CD8-positive, alpha-beta T cell (primary cell): ENCODE measurements at regions of chr11 and their contacts with region 1.

Region 1: GRCh38 chr11:3091791-3092602 is 34.8 kb upstream of the CARS1 start:
- DNase-seq: peak; percentile 50 to 86 (median 67)
- ATAC-seq: peak; percentile 97
- H3K4me3 ChIP-seq: no peak overlapping the region
- H3K4me3 Mint-ChIP-seq: no peak overlapping the region
- H3K27ac ChIP-seq: no peak overlapping the region
- H3K27ac Mint-ChIP-seq: no peak overlapping the region
- H3K4me1 ChIP-seq: no peaks in the 10 kb centered on the region
- H3K4me1 Mint-ChIP-seq: no peaks in the 10 kb centered on the region
- H3K27me3 ChIP-seq: no peaks in the 10 kb centered on the region
- H3K27me3 Mint-ChIP-seq: no peaks in the 10 kb centered on the region
- CTCF ChIP-seq: peak; percentile 90

Region 2: DNA sequence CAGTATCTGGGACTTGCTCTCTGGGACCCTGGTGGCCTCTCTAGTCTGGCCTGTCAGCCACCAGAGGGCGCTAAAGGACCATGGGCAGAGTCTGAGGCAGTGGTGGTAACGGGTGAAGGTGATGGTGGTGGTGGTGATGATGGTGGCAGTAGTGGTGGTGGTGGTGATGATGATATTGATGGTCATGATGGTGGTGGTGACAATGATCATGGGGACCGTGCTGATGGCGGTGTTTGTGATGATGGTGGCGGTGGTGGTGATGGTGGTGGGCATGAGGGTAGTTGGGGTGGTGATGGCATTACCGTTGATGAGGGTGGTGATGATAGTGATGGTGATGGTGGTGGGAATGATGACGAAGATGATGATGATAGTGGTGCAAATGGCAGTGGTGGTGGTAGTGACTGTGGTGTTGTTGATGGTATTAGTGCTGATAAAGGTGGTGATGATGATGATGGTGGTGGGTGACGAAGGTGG is 663.6 kb before region 1 on chr11:
- CTCF ChIA-PET with region 1: interaction called, 3 read pairs
- POLR2A ChIA-PET with region 1: no interaction called
- intact Hi-C with region 1: loop called in 1 of 2 experiments (anchors 2 kb)
- DNase-seq: peak; percentile 75 to 94 (median 87)
- ATAC-seq: peak; percentile 91
- H3K4me3 ChIP-seq: no peak overlapping the region
- H3K4me3 Mint-ChIP-seq: no peak overlapping the region
- H3K27ac ChIP-seq: no peak overlapping the region
- H3K27ac Mint-ChIP-seq: no peak overlapping the region
- H3K4me1 ChIP-seq: no peaks in the 10 kb centered on the region
- H3K4me1 Mint-ChIP-seq: no peaks in the 10 kb centered on the region
- H3K27me3 ChIP-seq: no peaks in the 10 kb centered on the region
- H3K27me3 Mint-ChIP-seq: no peaks in the 10 kb centered on the region
- CTCF ChIP-seq: peak; percentile 70

Region 3: DNA sequence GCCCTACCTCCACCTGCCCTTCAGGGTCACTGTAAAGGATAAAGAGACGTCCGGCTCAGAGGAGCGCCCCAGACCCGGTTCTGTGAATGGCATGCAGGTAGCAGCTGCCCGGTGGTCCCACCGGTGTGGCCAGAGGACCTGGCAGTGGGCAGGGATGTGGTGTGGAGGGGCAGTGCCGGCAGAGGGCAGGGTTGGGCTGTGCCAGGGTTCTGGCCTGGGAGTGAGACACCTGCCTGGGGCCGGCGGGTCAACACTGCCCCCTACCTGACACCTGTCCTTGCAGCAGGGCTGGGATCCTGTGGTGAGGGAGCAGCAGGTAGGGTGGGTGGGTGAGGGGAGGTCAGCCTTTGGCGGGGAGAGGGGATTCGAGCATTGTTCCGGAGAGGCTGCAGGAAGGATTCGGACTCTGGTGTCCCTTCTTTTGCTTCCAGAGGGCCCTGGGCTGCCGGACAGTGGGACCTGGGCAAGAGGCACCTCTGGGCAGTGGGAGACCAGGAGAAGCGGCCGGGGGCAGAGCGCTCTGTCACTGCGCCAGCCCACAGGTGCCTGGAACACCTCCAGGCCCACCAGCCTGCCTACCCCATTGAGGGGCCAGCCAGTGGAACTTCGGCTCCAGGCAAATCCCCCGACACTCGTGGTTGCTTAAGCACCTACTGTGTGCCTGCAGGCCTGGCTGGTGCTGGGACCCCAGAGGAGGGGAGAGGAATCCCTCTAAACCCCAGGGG is 161.1 kb before region 1 on chr11:
- CTCF ChIA-PET with region 1: interaction called, 13 read pairs
- POLR2A ChIA-PET with region 1: no interaction called
- intact Hi-C with region 1: loop called in 1 of 2 experiments (anchors 5 kb)
- DNase-seq: peak in 5 of 9 experiments; percentile 38 to 59 (median 49)
- ATAC-seq: no peak
- H3K4me3 ChIP-seq: peak overlapping the region; percentile 37 to 62
- H3K4me3 Mint-ChIP-seq: peak overlapping the region; percentile 80
- H3K27ac ChIP-seq: no peak overlapping the region
- H3K27ac Mint-ChIP-seq: no peak overlapping the region
- H3K4me1 ChIP-seq: peaks cover 36% of the 10 kb centered on the region
- H3K4me1 Mint-ChIP-seq: peaks cover 22% of the 10 kb centered on the region
- H3K27me3 ChIP-seq: peaks cover 12 to 17% of the 10 kb centered on the region in 2 experiments
- H3K27me3 Mint-ChIP-seq: peaks cover 24% of the 10 kb centered on the region
- CTCF ChIP-seq: no peak

Region 4: DNA sequence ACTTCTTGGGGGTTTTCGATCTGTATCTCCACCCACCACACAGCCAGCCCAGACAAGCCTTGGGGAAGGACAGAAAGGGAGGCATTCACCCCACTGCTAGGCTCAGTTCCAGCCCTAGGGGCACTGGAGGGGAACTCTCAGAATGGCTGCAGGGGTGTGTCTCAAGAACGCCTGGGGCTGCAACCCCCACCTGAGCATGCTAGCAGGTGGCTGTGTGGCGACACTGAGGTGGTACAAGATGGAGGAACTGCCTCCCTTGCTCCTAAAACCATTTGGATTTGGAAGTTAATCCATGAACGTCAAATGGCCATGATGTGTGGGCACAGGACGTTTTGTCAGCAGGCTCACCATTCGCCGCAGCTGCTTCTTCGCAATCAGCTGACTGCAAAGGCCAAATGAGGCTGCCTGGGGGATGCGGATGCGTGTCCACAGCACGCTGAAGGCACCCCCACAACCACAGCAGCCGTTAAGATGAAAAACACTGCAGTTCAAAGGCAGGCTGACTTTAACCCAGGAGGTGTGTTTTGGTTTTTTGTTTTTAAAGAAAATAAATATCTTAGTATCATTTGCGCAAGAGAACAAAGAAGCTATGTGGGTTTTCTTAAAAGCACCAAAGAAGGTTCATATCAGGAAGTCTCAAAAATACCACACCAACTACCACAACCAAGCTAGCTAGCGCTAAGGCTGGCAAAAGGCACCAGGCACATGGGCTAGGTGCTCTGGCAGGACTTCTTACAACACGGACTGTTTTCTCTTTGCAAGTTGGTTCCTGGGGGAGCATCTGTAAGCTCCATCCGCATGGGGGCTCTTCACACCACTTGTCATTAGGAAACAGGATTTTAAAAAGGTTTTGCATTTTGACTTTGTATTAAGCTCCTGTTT is 77.7 kb before region 1 on chr11:
- CTCF ChIA-PET with region 1: interaction called, 15 read pairs
- POLR2A ChIA-PET with region 1: interaction called, 3 read pairs
- intact Hi-C with region 1: no loop called
- DNase-seq: peak; percentile 61 to 94 (median 85)
- ATAC-seq: peak; percentile 84
- H3K4me3 ChIP-seq: peak overlapping the region; percentile 17 to 27
- H3K4me3 Mint-ChIP-seq: peak overlapping the region; percentile 57
- H3K27ac ChIP-seq: peak overlapping the region; percentile 46 to 62
- H3K27ac Mint-ChIP-seq: peak overlapping the region; percentile 92
- H3K4me1 ChIP-seq: peaks cover 86% of the 10 kb centered on the region
- H3K4me1 Mint-ChIP-seq: peaks cover 74% of the 10 kb centered on the region
- H3K27me3 ChIP-seq: no peaks in the 10 kb centered on the region
- H3K27me3 Mint-ChIP-seq: no peaks in the 10 kb centered on the region
- CTCF ChIP-seq: no peak

Region 5: DNA sequence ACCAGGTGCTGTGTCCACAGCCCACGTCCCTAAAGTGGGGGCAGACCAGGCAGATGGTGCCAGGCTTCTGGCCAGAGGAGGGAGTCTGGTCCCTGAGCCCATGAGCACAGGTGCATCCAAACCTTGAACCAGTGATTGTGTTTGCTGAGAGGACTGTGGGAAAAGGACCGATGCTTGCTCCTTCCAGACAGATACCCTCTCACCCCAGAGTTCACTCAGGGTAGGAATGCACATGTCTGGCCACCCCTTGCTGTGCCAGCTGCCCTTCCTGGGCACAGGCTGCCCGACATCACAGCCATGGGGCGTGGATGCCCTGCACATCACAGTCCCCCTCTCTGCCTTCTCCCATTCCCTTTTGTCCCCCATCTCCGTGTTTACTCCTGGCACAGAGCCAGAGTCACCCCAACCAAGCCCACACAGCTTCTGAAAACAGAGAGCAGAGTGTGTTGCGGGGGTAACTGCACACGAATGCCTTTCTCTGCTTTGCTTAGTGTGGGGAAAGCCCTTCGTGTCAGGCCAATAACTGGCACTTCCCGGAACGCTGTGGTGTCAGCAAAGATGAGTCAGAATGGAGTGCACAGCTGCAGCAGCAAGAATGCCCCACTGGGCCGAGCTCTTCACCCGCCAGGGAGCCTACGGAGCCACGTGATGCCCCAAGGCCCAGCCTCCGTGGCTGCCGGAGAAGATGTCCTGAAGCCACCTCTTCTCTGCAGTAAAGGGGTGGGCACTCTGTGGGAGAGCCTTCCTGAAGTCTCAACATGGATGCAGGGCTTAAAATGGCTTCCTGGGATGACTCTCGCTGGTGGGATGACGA is 42.4 kb before region 1 on chr11:
- CTCF ChIA-PET with region 1: interaction called, 10 read pairs
- POLR2A ChIA-PET with region 1: no interaction called
- intact Hi-C with region 1: loop called in 1 of 2 experiments (anchors 1 kb)
- DNase-seq: peak; percentile 32 to 91 (median 61)
- ATAC-seq: peak; percentile 95
- H3K4me3 ChIP-seq: no peak overlapping the region
- H3K4me3 Mint-ChIP-seq: no peak overlapping the region
- H3K27ac ChIP-seq: peak overlapping the region; percentile 42 to 75
- H3K27ac Mint-ChIP-seq: peak overlapping the region; percentile 90
- H3K4me1 ChIP-seq: no peaks in the 10 kb centered on the region
- H3K4me1 Mint-ChIP-seq: peaks cover 40% of the 10 kb centered on the region
- H3K27me3 ChIP-seq: no peaks in the 10 kb centered on the region
- H3K27me3 Mint-ChIP-seq: no peaks in the 10 kb centered on the region
- CTCF ChIP-seq: no peak